Activated B cell treated with CpG ODN at 0.5 μM for 24 hours (primary cell): ENCODE measurements at regions of chr15 and their contacts with region 1.

Region 1: GRCh38 chr15:80010131-80010673 is 39.2 kb upstream of the BCL2A1 start:
- DNase-seq: no peak
- ATAC-seq: peak; percentile 56
- H3K4me3 Mint-ChIP-seq: peak overlapping the region; percentile 57
- H3K27ac Mint-ChIP-seq: peak overlapping the region; percentile 87
- H3K4me1 Mint-ChIP-seq: peaks cover 73% of the 10 kb centered on the region
- H3K27me3 Mint-ChIP-seq: no peaks in the 10 kb centered on the region
- CTCF ChIP-seq: no peak

Region 2: GRCh38 chr15:80152180-80152845 is 142.1 kb after region 1 on chr15:
- CTCF ChIA-PET with region 1: no interaction called
- POLR2A ChIA-PET with region 1: interaction called, 3 read pairs
- intact Hi-C with region 1: loop called (anchors 5 kb)
- DNase-seq: peak; percentile 66
- ATAC-seq: peak; percentile 87
- H3K4me3 Mint-ChIP-seq: peak overlapping the region; percentile 86
- H3K27ac Mint-ChIP-seq: peak overlapping the region; percentile 68
- H3K4me1 Mint-ChIP-seq: peaks cover 15% of the 10 kb centered on the region
- H3K27me3 Mint-ChIP-seq: no peaks in the 10 kb centered on the region
- CTCF ChIP-seq: no peak